Astrocyte of the cerebellum (primary cell): ENCODE measurements at regions of chr7 and their contacts with region 1.

Region 1: DNA sequence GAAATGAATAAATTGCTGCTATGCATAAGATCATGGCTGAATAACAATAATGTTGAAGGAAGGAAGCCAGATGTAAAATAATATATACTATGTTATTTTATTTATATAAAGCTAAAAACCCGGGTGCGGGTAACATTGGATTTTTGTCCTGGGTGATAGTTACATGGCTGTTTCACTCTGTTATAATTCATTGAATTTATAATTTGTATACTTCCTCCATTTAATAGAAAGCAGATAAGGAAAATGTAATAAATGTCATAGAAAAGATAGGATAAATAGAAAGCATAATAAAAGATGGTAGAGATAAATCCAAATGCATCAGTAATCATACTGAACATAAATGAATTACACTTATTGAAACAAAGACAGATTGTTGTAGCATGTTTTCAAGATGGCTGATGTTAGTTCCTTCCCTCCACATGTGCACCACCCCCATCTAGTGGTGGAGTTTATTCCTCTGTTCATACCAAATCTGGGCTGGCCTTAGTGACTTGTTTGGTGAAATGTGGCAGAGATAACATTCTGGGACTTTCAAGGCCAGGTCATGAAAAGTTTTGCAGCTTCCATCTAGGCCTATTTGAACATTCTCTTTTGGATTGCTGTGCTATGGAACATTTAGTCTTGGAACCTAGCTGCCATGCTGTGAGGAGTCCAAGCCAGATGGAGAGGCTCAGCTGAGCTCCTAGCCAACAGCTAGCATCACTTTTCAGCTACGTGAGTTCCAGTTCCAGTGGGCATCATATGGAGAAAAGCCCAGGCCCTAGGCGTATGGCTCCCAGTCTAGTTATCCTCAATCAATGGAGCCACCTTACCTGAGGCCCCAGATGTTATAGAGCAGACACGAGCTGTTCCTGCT is 46.9 kb downstream of the AHCYL2 start:
- DNase-seq: peak; percentile 29
- H3K4me3 ChIP-seq: no peak overlapping the region
- CTCF ChIP-seq: peak; percentile 64

Region 2: GRCh38 chr7:129184981-129185670 is 86.6 kb before region 1 on chr7:
- in situ Hi-C with region 1: no loop called
- DNase-seq: no peak
- H3K4me3 ChIP-seq: no peak overlapping the region
- CTCF ChIP-seq: no peak

Region 3: DNA sequence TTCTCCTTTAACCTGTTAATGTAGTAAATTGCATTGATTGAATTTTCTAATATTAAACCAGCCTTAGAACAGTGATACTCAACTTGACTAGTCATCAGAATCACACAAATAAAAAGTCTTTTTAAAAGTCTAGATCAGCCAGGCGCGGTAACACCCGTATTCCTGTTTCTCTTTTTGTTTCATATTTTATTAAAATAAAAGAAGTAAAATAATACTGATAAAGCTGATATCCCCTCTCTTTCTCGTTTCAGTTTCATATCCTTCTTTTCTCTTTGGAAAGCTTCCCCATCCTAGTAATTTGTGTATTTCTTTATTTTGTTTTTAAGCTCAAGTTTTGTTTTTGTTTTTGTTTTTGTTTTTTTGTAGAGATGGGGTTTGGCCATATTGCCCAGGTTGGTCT is 74.0 kb before region 1 on chr7:
- in situ Hi-C with region 1: loop called (anchors 5 kb)
- DNase-seq: no peak
- H3K4me3 ChIP-seq: no peak overlapping the region
- CTCF ChIP-seq: no peak

Region 4: DNA sequence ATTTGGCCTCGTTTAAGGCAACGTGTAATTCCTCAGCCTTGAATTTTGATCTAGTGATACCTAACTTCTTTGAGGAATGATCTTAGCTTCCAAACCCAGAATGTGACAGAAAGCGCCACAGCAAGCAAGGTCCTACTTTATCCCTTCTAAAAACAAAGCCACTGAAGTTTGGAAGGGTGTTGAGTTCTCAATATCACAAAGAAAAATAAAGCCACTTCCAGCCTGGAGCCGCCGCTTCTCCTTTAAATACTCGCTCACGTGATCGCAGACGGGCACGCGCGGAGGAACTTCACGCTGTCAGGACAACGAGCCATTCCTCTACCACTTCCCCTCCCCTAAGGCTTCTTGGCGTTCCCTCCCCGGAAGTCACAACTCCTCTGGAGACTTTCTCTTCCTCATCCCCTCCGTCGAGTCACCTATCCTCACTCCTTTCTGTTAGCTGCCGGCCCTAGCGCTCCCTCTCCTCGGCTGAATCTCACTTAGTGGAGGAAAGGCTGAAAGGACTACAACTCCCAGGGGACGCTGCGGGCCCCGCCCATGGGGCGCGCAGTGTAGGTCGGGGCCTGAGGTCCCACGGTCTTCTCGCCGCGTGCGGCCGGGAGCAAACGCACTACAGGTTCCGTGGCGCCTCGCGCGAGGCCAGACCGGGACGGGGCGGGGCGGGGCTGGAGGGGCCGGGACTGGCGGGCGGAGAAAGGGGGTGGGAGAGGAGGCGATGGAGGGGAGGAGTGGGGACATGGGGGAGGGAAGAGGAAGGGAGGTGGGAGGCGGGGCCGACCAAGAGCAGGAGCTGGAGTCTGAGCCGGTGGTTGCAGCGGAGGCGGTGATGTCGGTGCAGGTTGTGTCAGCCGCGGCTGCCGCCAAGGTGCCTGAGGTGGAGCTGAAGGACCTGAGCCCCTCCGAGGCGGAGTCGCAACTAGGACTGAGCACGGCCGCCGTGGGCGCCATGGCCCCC is 47.2 kb before region 1 on chr7 and contains the start of gene AHCYL2:
- in situ Hi-C with region 1: loop called (anchors 5 kb)
- DNase-seq: peak; percentile 90
- H3K4me3 ChIP-seq: peak within 1 kb of the TSS; percentile 53
- CTCF ChIP-seq: no peak

Region 5: DNA sequence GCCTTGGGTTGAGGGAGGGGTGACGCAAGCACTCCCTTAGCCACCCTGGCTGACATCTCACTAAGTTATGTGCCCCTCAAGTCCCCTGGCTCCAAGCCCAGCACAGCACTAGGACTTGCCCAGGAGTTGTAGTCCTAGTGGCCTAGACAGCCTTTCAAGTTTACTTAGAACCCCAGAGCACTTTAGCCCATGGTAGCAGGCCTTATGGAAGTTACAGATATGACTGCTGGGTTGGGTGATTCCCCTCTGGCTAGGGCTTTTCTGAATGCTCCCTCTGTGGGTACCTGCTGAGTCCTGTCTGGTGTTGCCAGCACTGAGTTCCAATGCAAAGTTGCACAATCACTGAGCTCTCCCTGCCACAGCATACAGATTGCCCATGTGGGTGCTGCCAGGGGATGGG is 36.3 kb after region 1 on chr7:
- in situ Hi-C with region 1: no loop called
- DNase-seq: no peak
- H3K4me3 ChIP-seq: no peak overlapping the region
- CTCF ChIP-seq: no peak

Region 6: GRCh38 chr7:129514683-129515082 is 243.0 kb after region 1 on chr7:
- in situ Hi-C with region 1: no loop called
- DNase-seq: no peak
- H3K4me3 ChIP-seq: no peak overlapping the region
- CTCF ChIP-seq: no peak